Activated CD4-positive, alpha-beta T cell treated with anti-CD3 and anti-CD28 coated beads, Interleukin-2, amount 10 ng/mL, durations not matched to agents 24 days and 14 days (primary cell): ENCODE measurements at regions of chr2 and their contacts with region 1.

Region 1: DNA sequence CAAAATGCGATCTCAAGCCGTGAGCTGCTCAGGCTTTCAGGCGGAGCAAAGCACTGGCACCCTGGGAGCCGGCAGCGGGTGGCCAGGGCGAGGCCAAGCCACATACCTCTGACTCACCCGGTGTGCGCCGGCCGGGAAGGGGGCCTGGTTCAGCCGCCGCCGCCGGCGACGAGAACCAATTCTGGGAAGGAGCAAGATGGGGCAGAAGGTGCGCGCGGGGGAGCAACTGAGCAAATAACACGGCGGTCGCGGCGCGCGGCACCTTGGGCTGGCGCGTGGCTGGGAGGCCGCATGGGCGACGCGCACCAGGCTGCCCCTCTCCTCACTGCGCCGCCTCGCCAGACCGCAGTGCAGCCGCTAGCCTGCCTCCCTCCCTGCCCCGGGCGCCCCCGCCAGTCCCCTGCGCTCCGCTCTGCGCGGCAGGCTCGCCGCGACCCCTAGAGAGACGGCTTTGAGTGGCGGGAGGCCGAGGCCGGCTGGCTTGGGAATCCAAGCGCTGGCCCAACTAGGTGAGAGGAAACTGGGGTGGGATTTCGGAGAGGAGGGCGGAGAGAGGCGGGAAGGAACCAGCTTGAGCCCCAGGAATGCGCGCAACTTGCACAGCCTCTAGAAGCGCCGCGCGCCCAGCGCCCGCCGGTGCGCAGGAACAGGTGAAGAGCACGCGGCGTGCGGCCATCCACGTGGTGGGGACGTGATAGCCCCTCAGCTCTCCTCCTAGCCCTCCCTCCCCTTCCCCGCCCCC is 3.2 kb downstream of the NRP2 start:
- DNase-seq: peak; percentile 77
- H3K4me3 Mint-ChIP-seq: peak overlapping the region; percentile 86
- H3K27ac Mint-ChIP-seq: peak overlapping the region; percentile 94
- H3K4me1 Mint-ChIP-seq: peaks cover 44% of the 10 kb centered on the region
- H3K27me3 Mint-ChIP-seq: peaks cover 70% of the 10 kb centered on the region

Region 2: DNA sequence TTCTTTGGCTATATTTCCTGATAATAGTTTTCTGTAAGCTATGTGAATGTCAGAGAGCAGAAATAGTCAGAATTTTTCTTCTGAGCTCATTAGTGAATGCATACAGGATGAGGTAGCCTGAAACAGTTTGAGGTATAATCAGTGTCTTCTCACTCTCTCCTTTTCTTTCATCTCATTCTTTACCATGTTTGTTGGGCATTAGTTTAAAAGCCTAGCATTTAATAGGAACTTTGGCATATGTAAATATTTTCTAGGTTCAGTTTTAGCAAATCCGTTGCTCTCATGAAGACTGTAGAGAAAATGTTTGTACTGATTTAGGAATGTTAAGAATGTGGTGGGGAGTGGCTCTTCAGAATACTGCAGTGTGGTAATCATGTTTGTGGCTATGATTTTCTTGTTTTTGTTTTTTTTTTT is 1020.8 kb before region 1 on chr2:
- intact Hi-C with region 1: no loop called
- DNase-seq: no peak
- H3K4me3 Mint-ChIP-seq: no peak overlapping the region
- H3K27ac Mint-ChIP-seq: no peak overlapping the region
- H3K4me1 Mint-ChIP-seq: no peaks in the 10 kb centered on the region
- H3K27me3 Mint-ChIP-seq: peaks cover 5% of the 10 kb centered on the region

Region 3: DNA sequence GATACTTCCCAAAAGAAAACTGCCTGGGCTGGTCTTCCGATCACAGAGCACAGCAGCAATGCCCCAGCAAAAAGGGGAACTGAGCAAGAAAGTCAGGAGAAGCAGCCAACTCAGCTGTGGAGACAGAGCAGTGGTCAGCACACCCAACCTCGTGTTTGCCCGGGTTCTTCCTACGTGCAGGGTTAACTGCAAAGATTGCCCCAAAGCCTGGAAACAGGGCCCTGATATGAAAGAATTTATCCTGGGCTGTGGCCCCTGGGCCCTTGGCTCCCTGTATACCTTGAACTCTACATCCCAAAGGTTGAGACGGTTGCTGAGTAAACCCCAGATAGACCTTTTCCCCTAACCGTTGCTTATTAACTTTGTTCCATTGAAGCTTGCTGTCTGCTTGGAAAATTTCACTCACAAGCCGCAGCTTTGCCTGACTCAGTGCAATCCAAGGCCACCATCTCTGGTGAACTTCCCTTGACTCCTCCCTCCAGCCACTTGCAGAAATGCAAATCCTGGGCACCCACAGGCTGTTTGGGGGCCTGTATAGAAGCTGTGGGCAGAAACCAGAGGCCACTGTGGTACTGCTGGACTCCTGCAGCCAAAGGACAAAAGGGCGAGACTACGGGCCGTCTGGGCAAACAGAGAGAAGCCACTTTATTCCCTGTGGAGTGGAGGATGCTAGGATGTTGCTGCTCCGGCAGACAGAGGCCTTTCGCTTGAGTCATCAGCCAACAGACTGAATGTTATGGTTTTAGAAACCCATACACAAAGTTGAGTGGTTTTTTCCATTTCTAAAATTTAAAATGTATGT is 15.0 kb after region 1 on chr2:
- intact Hi-C with region 1: loop called (anchors 2 kb)
- DNase-seq: no peak
- H3K4me3 Mint-ChIP-seq: peak overlapping the region; percentile 63
- H3K27ac Mint-ChIP-seq: peak overlapping the region; percentile 95
- H3K4me1 Mint-ChIP-seq: peaks cover 43% of the 10 kb centered on the region
- H3K27me3 Mint-ChIP-seq: no peaks in the 10 kb centered on the region

Region 4: GRCh38 chr2:205706769-205707381 is 21.4 kb after region 1 on chr2:
- intact Hi-C with region 1: loop called (anchors 2 kb)
- DNase-seq: peak; percentile 86
- H3K4me3 Mint-ChIP-seq: peak overlapping the region; percentile 54
- H3K27ac Mint-ChIP-seq: peak overlapping the region; percentile 93
- H3K4me1 Mint-ChIP-seq: peaks cover 48% of the 10 kb centered on the region
- H3K27me3 Mint-ChIP-seq: no peaks in the 10 kb centered on the region

Region 5: DNA sequence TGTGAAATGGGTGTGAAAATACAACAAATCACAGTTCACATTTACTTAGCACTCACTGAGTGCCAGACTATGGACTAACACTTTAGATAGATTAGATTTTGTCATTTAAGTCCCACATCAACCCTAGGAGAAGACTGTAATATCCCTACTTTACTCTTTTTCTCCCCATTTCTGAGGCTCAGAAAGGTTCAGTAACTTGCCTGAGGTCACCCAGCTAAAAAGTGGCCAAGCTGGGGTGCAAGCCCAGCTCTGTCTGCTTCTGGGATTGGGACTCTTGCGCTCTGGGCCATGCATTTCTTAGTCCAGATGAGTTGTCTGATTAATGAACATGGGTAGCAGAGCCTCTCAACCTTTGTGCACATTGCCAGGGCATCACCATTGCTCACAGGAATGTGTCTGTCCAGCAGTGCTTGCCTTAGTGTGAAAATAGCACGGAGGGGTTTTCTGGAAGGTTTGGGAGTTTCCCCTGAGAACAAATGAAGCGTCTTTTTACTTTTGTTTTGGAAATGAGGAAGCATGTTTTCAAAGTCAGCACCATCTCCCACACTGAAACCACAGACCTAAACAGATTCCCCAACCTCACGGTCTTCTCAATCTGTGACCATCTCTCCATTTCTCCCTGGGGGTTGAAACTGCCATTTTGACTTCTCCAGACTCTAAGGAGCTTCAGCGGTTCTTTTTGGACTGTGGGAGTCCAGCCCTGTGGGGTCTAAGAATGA is 28.7 kb after region 1 on chr2:
- intact Hi-C with region 1: loop called (anchors 2 kb)
- DNase-seq: peak; percentile 60
- H3K4me3 Mint-ChIP-seq: peak overlapping the region; percentile 32
- H3K27ac Mint-ChIP-seq: peak overlapping the region; percentile 67
- H3K4me1 Mint-ChIP-seq: peaks cover 62% of the 10 kb centered on the region
- H3K27me3 Mint-ChIP-seq: no peaks in the 10 kb centered on the region

Region 6: GRCh38 chr2:205731583-205732071 is 46.1 kb after region 1 on chr2:
- intact Hi-C with region 1: no loop called
- DNase-seq: no peak
- H3K4me3 Mint-ChIP-seq: no peak overlapping the region
- H3K27ac Mint-ChIP-seq: no peak overlapping the region
- H3K4me1 Mint-ChIP-seq: no peaks in the 10 kb centered on the region
- H3K27me3 Mint-ChIP-seq: no peaks in the 10 kb centered on the region

Region 7: DNA sequence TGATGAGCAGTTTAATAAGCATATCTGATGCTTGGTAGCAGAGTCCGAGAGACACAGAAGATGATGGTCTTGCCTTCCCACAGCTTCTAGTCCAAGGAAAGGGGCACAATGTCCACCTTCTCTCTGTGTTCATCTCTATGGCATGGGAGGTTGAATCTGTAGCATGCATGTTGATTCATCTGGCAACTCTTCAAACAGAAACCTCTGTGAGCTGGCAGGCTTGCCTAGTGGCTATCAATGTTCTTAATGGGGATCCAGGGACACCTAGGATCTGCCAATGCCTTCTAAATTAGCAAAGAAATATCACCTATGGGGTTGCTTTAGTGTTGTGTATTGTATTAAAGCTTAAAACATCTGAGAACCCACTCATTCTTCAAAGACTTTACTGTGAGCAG is 229.6 kb after region 1 on chr2:
- intact Hi-C with region 1: no loop called
- DNase-seq: no peak
- H3K4me3 Mint-ChIP-seq: no peak overlapping the region
- H3K27ac Mint-ChIP-seq: no peak overlapping the region
- H3K4me1 Mint-ChIP-seq: no peaks in the 10 kb centered on the region
- H3K27me3 Mint-ChIP-seq: peaks cover 7% of the 10 kb centered on the region